A549 (cell line): ENCODE measurements at regions of chr5 and their contacts with region 1.

Region 1: DNA sequence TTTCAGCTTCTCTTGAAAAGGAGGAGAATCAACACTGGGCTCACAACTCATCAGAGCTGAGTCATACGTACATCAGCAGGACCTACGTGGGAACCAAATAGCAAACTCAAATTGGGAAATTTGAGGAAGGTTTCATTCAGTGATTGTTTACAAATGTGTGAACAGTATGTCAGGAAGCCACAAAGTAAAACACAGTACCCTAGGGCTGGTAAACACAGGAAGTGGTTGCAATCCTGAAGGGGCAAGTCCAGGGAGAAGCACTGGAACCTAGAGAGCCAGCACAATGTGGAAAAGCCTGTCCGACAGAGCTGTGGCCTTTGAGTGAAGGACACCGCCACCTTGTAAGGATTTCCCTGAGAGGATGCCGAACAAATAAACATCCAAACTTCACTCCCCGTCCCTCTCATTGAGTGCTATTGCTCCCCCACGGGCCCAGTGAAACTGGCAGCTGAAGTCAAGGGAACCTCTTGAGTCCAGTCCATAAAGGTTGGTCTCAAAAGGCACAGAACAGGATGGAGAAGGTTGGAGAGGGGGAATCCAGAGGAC is 26.7 kb upstream of the RICTOR start:
- DNase-seq: peak; percentile 93 to 99
- ATAC-seq: peak; percentile 82 to 95
- H3K4me3 ChIP-seq: no peak overlapping the region
- H3K27ac ChIP-seq: peak overlapping the region; percentile 90 to 95
- H3K4me1 ChIP-seq: peaks cover 57% of the 10 kb centered on the region
- CTCF ChIP-seq: no peak
- EP300 ChIP-seq: peak; percentile 98
- POLR2A ChIP-seq: no peak
- RAD21 ChIP-seq: peak; percentile 41 to 63

Region 2: DNA sequence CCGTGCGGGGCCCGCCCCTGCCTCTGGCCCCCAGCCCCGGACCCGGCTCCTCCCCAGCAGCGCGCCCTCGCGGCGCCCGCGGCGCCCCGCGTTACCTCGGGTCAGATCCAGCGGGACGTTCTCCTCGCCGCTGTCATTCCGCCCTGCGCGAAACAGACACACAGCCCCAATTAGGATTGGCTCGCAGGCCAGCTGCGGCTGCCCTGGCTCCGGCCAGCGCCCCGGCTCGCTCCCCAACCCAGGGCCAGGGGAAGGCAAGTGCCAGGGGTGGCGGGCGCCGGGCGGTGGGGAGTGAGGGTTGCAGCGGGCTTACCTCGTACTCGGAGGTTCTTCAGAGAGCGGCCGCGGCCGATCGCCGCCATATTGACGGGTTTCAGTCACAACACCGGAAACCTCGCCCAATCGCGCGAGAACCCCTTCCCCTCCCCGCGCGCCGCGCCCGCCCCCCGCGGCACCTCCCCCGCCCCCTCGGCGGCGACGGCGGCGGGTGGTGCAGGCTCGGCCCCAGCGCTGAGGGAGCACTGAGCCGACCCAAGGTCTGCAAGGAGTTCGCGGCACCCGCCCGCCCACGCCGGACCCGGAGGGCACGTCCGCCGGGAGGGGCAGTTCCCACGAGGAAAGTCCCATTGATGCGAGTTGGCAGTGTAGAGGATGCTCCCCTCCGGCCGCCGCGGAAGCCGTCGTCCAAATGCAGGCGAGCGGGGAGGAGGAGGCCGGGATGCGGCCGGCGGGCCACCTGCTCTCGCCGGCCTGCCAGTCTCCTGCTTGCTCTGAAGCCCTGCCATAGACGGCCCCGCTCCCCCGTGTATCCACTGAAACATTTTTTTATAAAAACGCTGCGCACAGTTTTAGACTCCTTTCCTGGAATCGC is 26.7 kb before region 1 on chr5 and contains the start of gene RICTOR:
- CTCF ChIA-PET with region 1: interaction called, 110 read pairs
- POLR2A ChIA-PET with region 1: interaction called, 13 read pairs
- DNase-seq: peak; percentile 79 to 94
- ATAC-seq: peak; percentile 83 to 90
- H3K4me3 ChIP-seq: peak within 1 kb of the TSS; percentile 90
- H3K27ac ChIP-seq: peak within 1 kb of the TSS; percentile 89 to 98
- H3K4me1 ChIP-seq: peaks cover 51% of the 10 kb centered on the region
- CTCF ChIP-seq: no peak
- EP300 ChIP-seq: peak in 1 of 2 experiments; percentile 16; a peak in 1 of 5 replicates
- POLR2A ChIP-seq: peak; percentile 87
- RAD21 ChIP-seq: peak; percentile 11 to 26; a peak in 2 of 5 replicates
- polyA plus RNA-seq, gene RICTOR: 26.8 and 28.5 TPM in 2 replicates